HepG2 (cell line): ENCODE measurements at regions of chr2 and their contacts with region 1.

Region 1: DNA sequence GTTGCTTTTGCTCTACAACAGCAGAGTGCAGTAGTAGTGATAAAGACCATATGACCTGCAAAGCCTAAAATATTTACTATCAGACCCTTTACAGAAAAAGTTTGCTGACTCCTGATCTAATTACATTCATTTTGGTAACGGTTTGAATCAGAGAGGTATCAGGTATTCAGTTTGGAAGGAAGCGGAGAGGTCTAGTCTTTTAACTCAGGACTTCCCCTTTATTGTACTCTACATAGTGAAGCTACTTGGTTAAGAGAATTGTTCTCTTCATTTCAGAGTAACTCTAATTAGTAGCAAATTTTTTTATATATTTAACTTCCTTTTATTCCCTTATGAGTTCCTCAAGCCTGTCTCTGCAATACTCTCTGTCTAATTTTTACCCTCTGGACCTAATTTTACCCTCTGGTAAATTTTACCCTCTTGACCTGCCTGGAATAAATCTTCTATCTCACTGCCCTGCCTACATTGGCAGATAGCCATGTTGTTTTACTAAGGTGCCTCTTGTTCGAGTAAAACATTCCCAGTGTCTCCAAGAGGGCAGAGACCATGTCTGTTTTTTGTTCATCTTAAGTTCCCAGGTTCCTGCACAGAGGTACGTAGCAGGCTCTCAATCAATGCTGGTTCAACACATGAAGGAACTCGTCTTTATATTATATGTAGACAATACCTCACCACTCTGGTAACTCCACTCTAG is 170.6 kb downstream of the DNAH6 start:
- DNase-seq: peak; percentile 35
- ATAC-seq: peak; percentile 45; the same call in 1 of the 3 replicates
- H3K4me3 ChIP-seq: no peak overlapping the region
- H3K27ac ChIP-seq: no peak overlapping the region
- H3K4me1 ChIP-seq: peaks cover 13% of the 10 kb centered on the region
- H3K27me3 ChIP-seq: peaks cover 0 to 1% of the 10 kb centered on the region in 2 experiments; a peak in 2 of 5 replicates
- CTCF ChIP-seq: no peak
- EP300 ChIP-seq: no peak
- POLR2A ChIP-seq: no peak
- RAD21 ChIP-seq: no peak

Region 2: GRCh38 chr2:83650898-83651297 is 1036.0 kb before region 1 on chr2:
- CTCF ChIA-PET with region 1: no interaction called
- POLR2A ChIA-PET with region 1: no interaction called
- in situ Hi-C with region 1: no loop called
- intact Hi-C with region 1: loop called (anchors 5 kb)
- DNase-seq: no peak
- ATAC-seq: no peak
- H3K4me3 ChIP-seq: no peak overlapping the region
- H3K27ac ChIP-seq: no peak overlapping the region
- H3K4me1 ChIP-seq: no peaks in the 10 kb centered on the region
- H3K27me3 ChIP-seq: no peaks in the 10 kb centered on the region
- CTCF ChIP-seq: no peak
- EP300 ChIP-seq: no peak
- POLR2A ChIP-seq: no peak
- RAD21 ChIP-seq: no peak